ENCODE measurements at regions of chr6 and their contacts with region 1.

Region 1: DNA sequence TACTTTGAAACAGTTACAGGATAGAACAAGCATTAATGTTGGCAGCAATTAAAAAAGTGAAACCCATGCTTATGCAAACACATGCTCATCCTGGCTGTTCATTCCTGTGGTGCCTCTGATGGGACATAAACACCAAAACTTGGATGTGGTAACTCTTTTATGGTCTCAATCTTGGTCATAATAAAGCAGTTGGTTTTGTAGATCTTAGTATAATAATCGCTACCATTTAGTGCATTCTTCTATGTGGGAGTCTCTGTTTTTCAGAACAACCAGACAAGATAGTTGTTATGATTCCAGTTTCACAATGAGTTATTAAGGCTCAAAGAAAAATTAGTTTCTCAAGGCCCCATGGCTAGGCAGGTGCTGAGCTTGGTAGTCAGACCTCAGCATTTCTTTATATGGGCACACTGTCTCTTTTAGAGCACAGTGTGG is 184.0 kb downstream of the UTRN start:
- DNase-seq: peak; percentile 46
- H3K4me3 Mint-ChIP-seq: peak overlapping the region; percentile 59
- H3K27ac Mint-ChIP-seq: peak overlapping the region; percentile 49
- H3K4me1 Mint-ChIP-seq: peaks cover 31% of the 10 kb centered on the region
- H3K27me3 Mint-ChIP-seq: no peaks in the 10 kb centered on the region

Region 2: GRCh38 chr6:144248476-144249301 is 220.5 kb before region 1 on chr6:
- CTCF ChIA-PET with region 1: no interaction called
- POLR2A ChIA-PET with region 1: no interaction called
- intact Hi-C with region 1: loop called (anchors 1 kb)
- DNase-seq: peak; percentile 29
- H3K4me3 Mint-ChIP-seq: peak overlapping the region; percentile 21
- H3K27ac Mint-ChIP-seq: peak overlapping the region; percentile 71
- H3K4me1 Mint-ChIP-seq: peaks cover 18% of the 10 kb centered on the region
- H3K27me3 Mint-ChIP-seq: peaks cover 22% of the 10 kb centered on the region

Region 3: GRCh38 chr6:144334131-144334708 is 134.9 kb before region 1 on chr6:
- CTCF ChIA-PET with region 1: no interaction called
- POLR2A ChIA-PET with region 1: no interaction called
- intact Hi-C with region 1: loop called (anchors 2 kb)
- DNase-seq: peak; percentile 84
- H3K4me3 Mint-ChIP-seq: peak overlapping the region; percentile 67
- H3K27ac Mint-ChIP-seq: peak overlapping the region; percentile 67
- H3K4me1 Mint-ChIP-seq: peaks cover 40% of the 10 kb centered on the region
- H3K27me3 Mint-ChIP-seq: no peaks in the 10 kb centered on the region

Measured in activated CD4-positive, alpha-beta memory T cell treated with anti-CD3 and anti-CD28 coated beads for 36 hours (primary cell).